Breast epithelium (tissue), 4 donors: ENCODE measurements at regions of chr3 and their contacts with region 1.

Region 1: GRCh38 chr3:165206454-165207266 is 10.5 kb upstream of the SLITRK3 start:
- DNase-seq: peak; percentile 28 to 63
- H3K4me3 ChIP-seq: peak overlapping the region; percentile 27 to 41 (median 29)
- H3K27ac ChIP-seq: no peak overlapping the region
- H3K4me1 ChIP-seq: no peaks in the 10 kb centered on the region
- H3K27me3 ChIP-seq: peaks cover 0 to 11% of the 10 kb centered on the region in 2 donors
- CTCF ChIP-seq: peak in 2 of 3 donors; percentile 46 to 63
- POLR2A ChIP-seq: no peak

Region 2: GRCh38 chr3:164064298-164064697 is 1142.4 kb before region 1 on chr3:
- intact Hi-C with region 1: no loop called
- DNase-seq: no peak
- H3K4me3 ChIP-seq: no peak overlapping the region
- H3K27ac ChIP-seq: no peak overlapping the region
- H3K4me1 ChIP-seq: no peaks in the 10 kb centered on the region
- H3K27me3 ChIP-seq: no peaks in the 10 kb centered on the region
- CTCF ChIP-seq: no peak
- POLR2A ChIP-seq: no peak

Region 3: DNA sequence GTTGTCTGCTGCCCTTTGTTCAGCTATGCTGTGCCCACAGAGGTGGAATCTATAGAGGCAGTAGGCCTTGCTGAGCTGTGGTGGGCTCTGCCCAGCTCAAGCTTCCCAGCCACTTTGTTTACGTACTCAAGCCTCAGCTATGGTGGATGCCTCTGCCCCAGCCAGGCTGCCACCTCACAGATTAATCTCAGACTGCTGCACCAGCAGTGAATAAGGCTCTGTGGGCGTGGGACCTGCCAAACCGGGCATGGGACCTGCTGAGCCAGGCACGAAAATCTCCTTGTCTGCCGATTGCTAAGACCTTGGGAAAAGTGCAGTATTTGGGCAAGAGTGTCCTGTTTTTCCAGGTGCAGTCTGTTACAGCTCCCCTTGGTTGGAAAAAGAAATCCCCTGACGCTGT is 37.3 kb before region 1 on chr3:
- intact Hi-C with region 1: no loop called
- DNase-seq: no peak
- H3K4me3 ChIP-seq: no peak overlapping the region
- H3K27ac ChIP-seq: no peak overlapping the region
- H3K4me1 ChIP-seq: no peaks in the 10 kb centered on the region
- H3K27me3 ChIP-seq: no peaks in the 10 kb centered on the region
- CTCF ChIP-seq: no peak
- POLR2A ChIP-seq: no peak

Region 4: GRCh38 chr3:165346503-165346902 is 139.8 kb after region 1 on chr3:
- intact Hi-C with region 1: loop called (anchors 5 kb)
- DNase-seq: no peak
- H3K4me3 ChIP-seq: no peak overlapping the region
- H3K27ac ChIP-seq: no peak overlapping the region
- H3K4me1 ChIP-seq: no peaks in the 10 kb centered on the region
- H3K27me3 ChIP-seq: no peaks in the 10 kb centered on the region
- CTCF ChIP-seq: no peak
- POLR2A ChIP-seq: no peak

Region 5: DNA sequence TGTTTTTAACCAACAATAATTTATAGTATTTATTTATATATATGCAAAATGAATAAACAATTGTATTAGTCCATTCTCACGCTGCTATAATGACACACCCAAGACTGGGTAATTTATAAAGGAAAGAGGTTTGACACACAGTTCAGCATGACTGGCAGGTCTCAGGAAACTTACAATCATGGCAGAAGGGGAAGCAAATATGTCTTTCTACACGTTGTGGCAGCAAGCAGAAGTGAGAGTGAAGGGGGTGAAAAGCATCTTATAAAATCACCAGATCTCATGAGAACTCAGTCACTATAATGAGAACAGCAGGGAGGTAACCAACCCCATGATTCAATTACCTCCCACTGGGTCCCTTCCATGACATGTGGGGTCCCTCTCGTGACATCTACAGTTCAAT is 152.3 kb after region 1 on chr3:
- intact Hi-C with region 1: no loop called
- DNase-seq: no peak
- H3K4me3 ChIP-seq: no peak overlapping the region
- H3K27ac ChIP-seq: no peak overlapping the region
- H3K4me1 ChIP-seq: no peaks in the 10 kb centered on the region
- H3K27me3 ChIP-seq: no peaks in the 10 kb centered on the region
- CTCF ChIP-seq: no peak
- POLR2A ChIP-seq: no peak

Region 6: DNA sequence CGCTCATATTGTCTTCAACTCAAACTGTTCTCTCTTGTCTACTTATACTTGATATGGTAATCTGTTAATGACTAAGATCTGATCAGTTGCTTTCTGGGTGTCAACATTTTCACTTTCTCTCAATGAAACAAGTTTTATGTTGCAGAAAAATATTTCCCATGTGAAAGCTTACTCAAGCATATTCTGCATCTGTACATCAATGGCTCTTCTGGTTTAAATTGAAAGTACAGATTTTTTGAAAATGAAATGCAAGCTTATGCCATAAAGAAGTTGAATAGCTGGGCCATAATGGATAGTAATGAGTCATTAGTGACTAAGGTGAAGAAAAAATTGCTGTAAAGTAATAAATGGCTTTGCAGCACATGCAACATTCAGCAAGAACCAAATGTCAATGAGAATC is 489.8 kb after region 1 on chr3:
- intact Hi-C with region 1: no loop called
- DNase-seq: no peak
- H3K4me3 ChIP-seq: no peak overlapping the region
- H3K27ac ChIP-seq: no peak overlapping the region
- H3K4me1 ChIP-seq: no peaks in the 10 kb centered on the region
- H3K27me3 ChIP-seq: no peaks in the 10 kb centered on the region
- CTCF ChIP-seq: no peak
- POLR2A ChIP-seq: no peak